Naive thymus-derived CD8-positive, alpha-beta T cell (primary cell): ENCODE measurements at regions of chrX and their contacts with region 1.

Region 1: DNA sequence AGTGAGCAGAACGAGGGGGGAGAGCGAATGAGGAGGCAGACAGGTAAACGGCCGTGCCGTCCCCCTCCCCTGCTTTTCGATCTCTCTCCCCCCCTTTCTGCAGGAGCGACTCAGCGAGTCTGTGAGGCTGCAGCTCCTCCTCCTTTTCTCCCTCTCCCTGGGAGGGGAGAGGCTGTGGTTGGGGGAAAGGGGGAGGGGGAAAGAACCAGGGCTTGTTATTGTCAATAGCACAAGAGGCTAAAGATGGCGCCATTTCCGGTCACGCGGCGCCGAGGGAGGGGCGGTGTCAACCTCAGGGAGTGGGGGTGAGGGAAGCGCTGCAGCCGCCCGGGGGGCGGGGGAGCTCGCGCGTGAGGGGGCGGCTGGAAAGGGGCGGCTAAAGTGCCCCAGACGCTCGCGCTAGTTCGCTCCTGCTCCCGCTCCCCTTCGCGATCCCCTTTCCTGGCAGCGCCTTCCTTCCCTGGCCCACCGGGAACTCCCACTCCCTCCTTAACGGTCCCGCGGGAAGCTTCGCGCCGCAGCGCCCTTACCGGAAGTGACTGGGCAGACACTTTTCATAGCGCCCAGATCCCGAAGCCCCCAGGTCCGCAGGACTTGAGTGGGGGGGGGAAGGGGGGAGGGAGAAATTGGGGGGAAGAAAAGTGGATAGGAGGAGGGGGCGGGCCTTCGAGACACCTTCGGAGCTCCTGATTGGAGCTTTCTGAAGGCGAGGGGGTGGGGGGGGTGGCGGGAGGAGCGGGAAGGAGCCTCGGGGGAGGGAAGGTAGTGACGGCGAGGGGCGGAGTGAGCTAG is at the start of gene CUL4B:
- DNase-seq: peak; percentile 78 to 97 (median 90)
- ATAC-seq: peak; percentile 84 to 91
- H3K4me3 Mint-ChIP-seq: peak within 1 kb of the TSS; percentile 93 to 100 (median 97)
- H3K27ac Mint-ChIP-seq: peak within 1 kb of the TSS; percentile 93 to 99 (median 98)
- H3K4me1 Mint-ChIP-seq: peaks cover 4 to 35% (median 19%) of the 10 kb centered on the region in 4 donors
- H3K27me3 Mint-ChIP-seq: no peaks in the 10 kb centered on the region
- polyA plus RNA-seq, gene CUL4B: 23.6 to 27.9 (median 23.9) TPM

Region 2: GRCh38 chrX:120485638-120486520 is 75.2 kb before region 1 on chrX:
- POLR2A ChIA-PET with region 1: interaction called, 12 read pairs
- DNase-seq: peak; percentile 15 to 59 (median 33)
- ATAC-seq: peak; percentile 75 to 84
- H3K4me3 Mint-ChIP-seq: peak overlapping the region; percentile 81 to 94 (median 90)
- H3K27ac Mint-ChIP-seq: peak overlapping the region; percentile 61 to 95 (median 92)
- H3K4me1 Mint-ChIP-seq: peaks cover 7 to 33% (median 20%) of the 10 kb centered on the region in 4 donors
- H3K27me3 Mint-ChIP-seq: no peaks in the 10 kb centered on the region

Region 3: GRCh38 chrX:120575379-120576114 is 14.5 kb after region 1 on chrX:
- POLR2A ChIA-PET with region 1: interaction called, 13 read pairs
- DNase-seq: no peak
- ATAC-seq: no peak
- H3K4me3 Mint-ChIP-seq: no peak overlapping the region
- H3K27ac Mint-ChIP-seq: no peak overlapping the region
- H3K4me1 Mint-ChIP-seq: peaks cover 4 to 12% (median 7%) of the 10 kb centered on the region in 4 donors
- H3K27me3 Mint-ChIP-seq: no peaks in the 10 kb centered on the region

Region 4: GRCh38 chrX:120603707-120604360 is 42.8 kb after region 1 on chrX and contains the start of gene MCTS1:
- POLR2A ChIA-PET with region 1: interaction called, 111 read pairs
- DNase-seq: peak; percentile 57 to 89 (median 77)
- ATAC-seq: peak; percentile 93
- H3K4me3 Mint-ChIP-seq: peak within 1 kb of the TSS; percentile 90 to 99 (median 96)
- H3K27ac Mint-ChIP-seq: peak within 1 kb of the TSS; percentile 95 to 99 (median 98)
- H3K4me1 Mint-ChIP-seq: peaks cover 4 to 15% (median 9%) of the 10 kb centered on the region in 4 donors
- H3K27me3 Mint-ChIP-seq: no peaks in the 10 kb centered on the region
- polyA plus RNA-seq, gene MCTS1: 68.2 to 72.4 (median 71.3) TPM

Region 5: DNA sequence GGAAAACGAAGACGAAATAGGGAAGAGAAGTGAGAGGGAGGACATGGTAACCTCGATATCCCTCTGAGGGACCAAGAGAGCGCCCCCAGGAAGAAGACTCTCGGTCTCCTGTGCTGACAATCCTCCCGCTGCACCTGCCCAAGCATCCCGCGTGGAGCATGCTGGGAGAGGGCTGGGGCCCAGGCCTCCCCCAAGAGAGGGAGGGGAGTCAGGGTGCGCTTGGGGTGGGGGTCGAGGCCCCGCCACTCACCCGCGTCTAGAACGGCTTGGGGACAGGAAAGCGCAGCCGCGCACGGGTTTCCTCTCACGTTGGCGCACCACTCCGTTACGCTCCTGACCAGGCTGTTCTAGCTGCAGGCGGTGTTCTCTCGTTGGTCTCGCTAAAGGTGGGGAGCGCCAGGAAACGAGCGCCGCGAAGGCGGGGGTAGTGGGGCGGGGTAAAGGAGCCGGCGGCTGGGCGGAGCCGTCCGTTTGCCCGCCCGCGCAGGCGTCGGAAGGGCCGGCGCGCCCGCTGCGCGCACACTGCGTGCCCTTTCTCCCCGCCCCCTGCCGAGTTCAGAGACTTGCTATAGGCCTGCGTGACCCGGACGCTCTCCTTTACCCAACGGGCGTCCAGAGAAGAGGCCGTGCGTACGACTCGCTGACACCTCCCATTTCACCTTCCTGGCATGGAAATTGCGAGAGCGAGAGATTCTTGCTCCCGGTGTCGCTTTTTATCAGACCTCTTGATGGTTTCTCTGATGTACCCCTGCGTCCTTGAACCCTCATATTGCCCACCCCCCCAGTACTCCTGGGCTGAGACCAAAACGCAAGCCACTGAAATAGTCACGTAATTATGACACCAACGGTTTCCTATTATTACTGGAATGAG is 68.9 kb after region 1 on chrX and contains the start of gene C1GALT1C1:
- POLR2A ChIA-PET with region 1: interaction called, 22 read pairs
- DNase-seq: peak; percentile 78 to 95 (median 90)
- ATAC-seq: peak; percentile 92 to 94
- H3K4me3 Mint-ChIP-seq: peak within 1 kb of the TSS; percentile 87 to 97 (median 91)
- H3K27ac Mint-ChIP-seq: peak within 1 kb of the TSS; percentile 93 to 99 (median 99)
- H3K4me1 Mint-ChIP-seq: peaks cover 5 to 30% (median 17%) of the 10 kb centered on the region in 4 donors
- H3K27me3 Mint-ChIP-seq: no peaks in the 10 kb centered on the region
- polyA plus RNA-seq, gene C1GALT1C1: 10.1 to 15.1 (median 11.5) TPM